OCI-LY7 (cell line): ENCODE measurements at regions of chr17 and their contacts with region 1.

Region 1: GRCh38 chr17:7383742-7384488 is 3.0 kb downstream of the TNK1 start:
- DNase-seq: peak; percentile 72
- H3K4me3 ChIP-seq: peak overlapping the region; percentile 64
- H3K27ac ChIP-seq: no peak overlapping the region
- H3K4me1 ChIP-seq: peaks cover 11% of the 10 kb centered on the region
- CTCF ChIP-seq: no peak

Region 2: DNA sequence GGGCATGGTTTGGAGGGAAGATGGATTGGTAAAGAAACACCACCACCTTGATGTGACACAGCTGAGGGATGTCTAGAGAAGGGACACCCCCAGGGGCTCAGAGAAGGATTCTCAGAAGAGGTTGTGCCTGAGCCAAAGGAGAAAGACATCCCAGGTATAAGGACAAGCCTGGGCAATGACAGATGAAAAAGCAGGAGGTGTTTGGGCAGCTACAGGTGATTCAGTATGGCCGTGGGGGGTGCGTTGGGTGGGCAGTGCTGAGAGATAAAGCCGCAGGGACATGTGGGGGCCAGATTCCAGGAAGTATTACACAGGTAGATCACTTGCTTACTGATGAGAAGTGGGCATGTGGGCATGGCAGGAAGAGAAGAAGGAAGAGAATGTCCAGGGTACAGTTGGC is 22.0 kb before region 1 on chr17:
- CTCF ChIA-PET with region 1: no interaction called
- POLR2A ChIA-PET with region 1: no interaction called
- intact Hi-C with region 1: loop called (anchors 2 kb)
- DNase-seq: no peak
- H3K4me3 ChIP-seq: no peak overlapping the region
- H3K27ac ChIP-seq: no peak overlapping the region
- H3K4me1 ChIP-seq: no peaks in the 10 kb centered on the region
- CTCF ChIP-seq: no peak